ENCODE measurements at regions of chr2 and their contacts with region 1.

Region 1: GRCh38 chr2:237572021-237572741 is 5.8 kb downstream of the PRLH start:
- DNase-seq: peak; percentile 96
- H3K4me3 ChIP-seq: peak overlapping the region in 1 of 2 experiments; percentile 17; a peak in 1 of 4 replicates
- H3K27ac ChIP-seq: peak overlapping the region in 1 of 2 experiments; percentile 21; a peak in 2 of 4 replicates
- H3K4me1 ChIP-seq: peaks cover 6 to 16% of the 10 kb centered on the region in 2 experiments; a peak in 3 of 4 replicates
- H3K27me3 ChIP-seq: no peaks in the 10 kb centered on the region
- CTCF ChIP-seq: peak; percentile 98
- EP300 ChIP-seq: no peak
- RAD21 ChIP-seq: peak; percentile 98

Region 2: GRCh38 chr2:237085248-237086221 is 486.6 kb before region 1 on chr2 and contains the start of gene COPS8:
- CTCF ChIA-PET with region 1: interaction called, 30 read pairs
- POLR2A ChIA-PET with region 1: no interaction called
- DNase-seq: peak; percentile 95
- H3K4me3 ChIP-seq: peak within 1 kb of the TSS; percentile 77 to 98
- H3K27ac ChIP-seq: peak within 1 kb of the TSS; percentile 85 to 94
- H3K4me1 ChIP-seq: peaks cover 0 to 18% of the 10 kb centered on the region in 2 experiments; a peak in 2 of 4 replicates
- H3K27me3 ChIP-seq: no peaks in the 10 kb centered on the region
- CTCF ChIP-seq: peak; percentile 42
- EP300 ChIP-seq: peak in 1 of 2 experiments; percentile 47; a peak in 2 of 4 replicates
- RAD21 ChIP-seq: no peak
- polyA plus RNA-seq, gene COPS8: 107 and 123 TPM in 2 replicates

Region 3: GRCh38 chr2:237159006-237159911 is 412.9 kb before region 1 on chr2:
- CTCF ChIA-PET with region 1: interaction called, 25 read pairs
- POLR2A ChIA-PET with region 1: no interaction called
- DNase-seq: no peak
- H3K4me3 ChIP-seq: no peak overlapping the region
- H3K27ac ChIP-seq: peak overlapping the region in 1 of 2 experiments; percentile 55; a peak in 2 of 4 replicates
- H3K4me1 ChIP-seq: peaks cover 23 to 24% of the 10 kb centered on the region in 2 experiments; a peak in 3 of 4 replicates
- H3K27me3 ChIP-seq: no peaks in the 10 kb centered on the region
- CTCF ChIP-seq: no peak
- EP300 ChIP-seq: no peak
- RAD21 ChIP-seq: no peak

Region 4: DNA sequence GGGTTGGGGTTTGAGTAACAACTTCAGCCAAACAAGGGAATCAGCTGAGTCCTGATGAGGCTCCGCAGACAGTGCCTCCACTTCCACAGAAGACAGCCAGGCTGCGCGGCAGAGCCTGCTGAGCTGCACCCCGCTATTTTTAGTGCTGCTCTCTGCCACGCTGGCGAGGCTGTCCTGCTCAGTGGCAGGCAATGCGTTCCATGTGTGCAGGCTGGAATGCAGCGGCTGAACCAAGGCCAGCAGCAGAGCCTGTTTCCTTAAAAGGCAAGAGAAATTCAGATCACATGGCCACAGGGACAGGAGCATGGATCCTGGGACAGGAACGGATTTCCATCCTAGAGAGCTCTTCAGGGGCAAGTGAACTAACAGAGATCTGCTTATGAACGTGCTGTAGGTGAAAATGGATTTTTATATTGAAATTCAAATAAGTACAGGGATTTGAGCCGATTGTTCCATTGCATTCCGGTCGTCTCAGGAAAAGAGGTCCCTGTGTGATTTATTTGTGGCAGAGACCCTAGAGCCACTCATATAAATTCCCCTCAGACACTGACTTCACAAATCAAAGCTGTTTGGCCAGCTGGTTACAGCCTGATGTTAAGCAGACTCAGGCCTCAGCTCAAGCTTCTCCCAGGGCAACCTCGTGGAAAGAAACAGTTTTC is 256.9 kb before region 1 on chr2:
- CTCF ChIA-PET with region 1: no interaction called
- POLR2A ChIA-PET with region 1: no interaction called
- DNase-seq: peak; percentile 81
- H3K4me3 ChIP-seq: no peak overlapping the region
- H3K27ac ChIP-seq: peak overlapping the region; percentile 90 to 96
- H3K4me1 ChIP-seq: peaks cover 15 to 23% of the 10 kb centered on the region in 2 experiments
- H3K27me3 ChIP-seq: no peaks in the 10 kb centered on the region
- CTCF ChIP-seq: no peak
- EP300 ChIP-seq: peak; percentile 41 to 85; a peak in 3 of 4 replicates
- RAD21 ChIP-seq: peak; percentile 36; the same call in 1 of the 2 replicates

Region 5: DNA sequence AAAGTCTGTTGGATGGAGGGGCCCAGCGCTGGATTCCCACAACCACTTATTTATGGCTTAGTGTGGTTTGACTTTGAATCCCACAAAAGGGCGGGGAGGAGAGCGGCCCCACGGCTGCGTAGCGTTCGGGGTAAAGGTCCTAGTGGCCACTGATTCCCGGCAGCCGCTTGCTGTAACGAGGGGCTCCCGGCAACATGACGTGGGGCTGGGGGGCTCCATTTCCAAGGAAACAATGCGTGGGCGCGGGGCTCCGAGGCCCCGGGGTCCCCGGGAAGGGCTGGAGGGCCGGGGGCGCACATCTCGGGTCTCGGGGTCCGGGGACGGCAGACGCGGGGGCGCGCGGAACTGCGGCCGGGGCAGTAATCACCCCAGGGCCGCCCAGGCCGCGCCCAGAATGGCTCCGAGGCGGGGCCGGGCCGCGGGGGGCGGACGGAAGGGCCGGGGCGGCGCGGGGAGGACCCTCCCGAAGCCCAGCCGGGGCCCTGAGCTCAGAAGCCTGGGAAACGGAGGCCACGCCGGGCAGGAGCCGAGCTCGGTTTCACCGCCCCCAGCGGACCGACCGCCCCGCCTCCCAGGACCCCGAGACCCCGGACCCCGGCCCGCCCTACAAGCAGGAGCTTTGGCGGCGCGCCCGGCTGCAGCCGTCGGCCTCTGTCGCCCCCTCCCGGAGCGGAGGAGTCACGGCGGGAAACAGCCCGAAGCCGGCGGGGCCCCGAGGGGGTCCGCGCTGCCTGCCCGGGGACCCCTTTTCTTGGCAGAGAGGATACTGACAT is 97.1 kb before region 1 on chr2:
- CTCF ChIA-PET with region 1: interaction called, 16 read pairs
- POLR2A ChIA-PET with region 1: interaction called, 3 read pairs
- DNase-seq: peak; percentile 99
- H3K4me3 ChIP-seq: peak overlapping the region; percentile 67 to 68
- H3K27ac ChIP-seq: peak overlapping the region; percentile 91 to 97
- H3K4me1 ChIP-seq: peaks cover 8 to 18% of the 10 kb centered on the region in 2 experiments; a peak in 3 of 4 replicates
- H3K27me3 ChIP-seq: no peaks in the 10 kb centered on the region
- CTCF ChIP-seq: peak; percentile 85
- EP300 ChIP-seq: peak in 1 of 2 experiments; percentile 41; a peak in 1 of 4 replicates
- RAD21 ChIP-seq: peak; percentile 68

Region 6: GRCh38 chr2:237524631-237525030 is 47.5 kb before region 1 on chr2:
- CTCF ChIA-PET with region 1: interaction called, 27 read pairs
- POLR2A ChIA-PET with region 1: no interaction called
- DNase-seq: peak; percentile 33
- H3K4me3 ChIP-seq: no peak overlapping the region
- H3K27ac ChIP-seq: no peak overlapping the region
- H3K4me1 ChIP-seq: peaks cover 0 to 6% of the 10 kb centered on the region in 2 experiments; a peak in 1 of 4 replicates
- H3K27me3 ChIP-seq: no peaks in the 10 kb centered on the region
- CTCF ChIP-seq: no peak
- EP300 ChIP-seq: no peak
- RAD21 ChIP-seq: no peak

Region 7: GRCh38 chr2:237558906-237559641 is 13.1 kb before region 1 on chr2:
- CTCF ChIA-PET with region 1: interaction called, 59 read pairs
- POLR2A ChIA-PET with region 1: no interaction called
- DNase-seq: no peak
- H3K4me3 ChIP-seq: no peak overlapping the region
- H3K27ac ChIP-seq: no peak overlapping the region
- H3K4me1 ChIP-seq: peaks cover 0 to 6% of the 10 kb centered on the region in 2 experiments; a peak in 1 of 4 replicates
- H3K27me3 ChIP-seq: no peaks in the 10 kb centered on the region
- CTCF ChIP-seq: no peak
- EP300 ChIP-seq: no peak
- RAD21 ChIP-seq: no peak

Region 8: GRCh38 chr2:237720444-237720843 is 148.3 kb after region 1 on chr2:
- CTCF ChIA-PET with region 1: no interaction called
- POLR2A ChIA-PET with region 1: no interaction called
- DNase-seq: no peak
- H3K4me3 ChIP-seq: no peak overlapping the region
- H3K27ac ChIP-seq: no peak overlapping the region
- H3K4me1 ChIP-seq: peaks cover 27 to 57% of the 10 kb centered on the region in 2 experiments
- H3K27me3 ChIP-seq: no peaks in the 10 kb centered on the region
- CTCF ChIP-seq: no peak
- EP300 ChIP-seq: no peak
- RAD21 ChIP-seq: no peak

Region 9: DNA sequence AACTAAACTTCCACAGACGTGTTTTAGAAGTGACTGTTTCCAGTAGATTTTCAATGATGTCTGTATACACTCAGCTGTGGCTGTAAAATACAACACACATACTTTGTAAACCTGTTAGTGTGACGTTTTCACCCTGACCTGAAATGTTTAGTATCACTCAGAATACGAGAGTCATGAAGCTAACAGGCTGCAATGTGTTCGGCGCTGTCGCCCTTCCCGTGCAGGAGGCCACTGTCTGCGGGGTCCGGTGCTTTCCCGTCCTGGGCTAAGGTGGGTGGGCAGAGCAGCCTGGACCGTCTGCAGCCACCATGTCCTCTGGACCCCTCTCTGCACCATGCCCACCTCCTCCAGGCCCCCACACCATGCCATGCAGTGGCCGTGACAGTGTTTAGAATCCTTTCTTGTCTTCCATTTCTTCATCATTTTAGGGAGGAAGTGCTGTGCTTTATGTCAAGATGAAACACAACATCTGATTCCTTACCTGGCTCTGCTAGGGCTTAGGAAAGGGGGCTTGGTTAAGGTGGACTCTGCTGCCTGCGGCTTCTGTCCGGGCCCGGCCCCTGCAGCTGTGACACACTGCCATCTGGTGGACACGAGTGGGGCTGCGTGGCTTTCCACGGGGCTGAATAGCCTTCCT is 172.6 kb after region 1 on chr2:
- CTCF ChIA-PET with region 1: interaction called, 24 read pairs
- POLR2A ChIA-PET with region 1: no interaction called
- DNase-seq: peak; percentile 92
- H3K4me3 ChIP-seq: no peak overlapping the region; a peak in 1 of 4 replicates
- H3K27ac ChIP-seq: peak overlapping the region in 1 of 2 experiments; percentile 16; a peak in 1 of 4 replicates
- H3K4me1 ChIP-seq: peaks cover 3 to 10% of the 10 kb centered on the region in 2 experiments; a peak in 2 of 4 replicates
- H3K27me3 ChIP-seq: no peaks in the 10 kb centered on the region
- CTCF ChIP-seq: peak; percentile 98
- EP300 ChIP-seq: no peak
- RAD21 ChIP-seq: peak; percentile 99

Measured in SK-N-SH (cell line).